ENCODE measurements at regions of chr4 and their contacts with region 1.

Region 1: DNA sequence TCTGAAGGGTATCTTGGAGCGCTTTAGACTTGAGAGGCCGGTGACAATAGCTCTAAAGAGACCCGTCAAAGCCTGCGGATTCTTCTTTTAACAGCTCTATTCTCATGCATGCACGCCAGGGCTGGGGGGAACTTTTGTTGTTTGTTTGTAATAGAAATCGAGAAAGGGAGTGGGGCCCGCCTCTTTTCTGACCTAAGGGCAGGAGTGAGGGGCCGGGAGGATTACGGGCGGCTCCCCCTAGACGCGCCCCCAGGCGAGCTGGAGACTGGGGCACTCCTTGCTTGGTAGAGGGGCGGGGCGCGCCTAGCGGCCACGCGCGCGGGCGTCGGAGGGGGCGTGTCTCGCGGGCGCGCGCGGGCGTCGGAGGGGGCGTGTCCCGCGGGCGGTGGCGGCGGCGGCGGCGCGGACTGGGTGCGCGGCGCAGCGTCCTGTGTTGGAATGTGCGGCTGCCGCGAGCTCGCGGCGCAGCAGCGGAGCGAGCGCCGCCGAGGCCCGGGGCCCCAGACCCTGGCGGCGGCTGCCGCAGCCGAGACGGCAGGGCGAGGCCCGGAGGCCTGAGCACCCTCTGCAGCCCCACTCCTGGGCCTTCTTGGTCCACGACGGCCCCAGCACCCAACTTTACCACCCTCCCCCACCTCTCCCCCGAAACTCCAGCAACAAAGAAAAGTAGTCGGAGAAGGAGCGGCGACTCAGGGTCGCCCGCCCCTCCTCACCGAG is at the start of gene REST:
- DNase-seq: peak; percentile 74 to 88
- H3K4me3 ChIP-seq: peak within 1 kb of the TSS; percentile 95
- H3K4me3 Mint-ChIP-seq: peak within 1 kb of the TSS; percentile 92
- H3K27ac Mint-ChIP-seq: peak within 1 kb of the TSS; percentile 97
- H3K4me1 ChIP-seq: peaks cover 21% of the 10 kb centered on the region
- H3K4me1 Mint-ChIP-seq: peaks cover 32% of the 10 kb centered on the region
- H3K27me3 ChIP-seq: no peaks in the 10 kb centered on the region
- H3K27me3 Mint-ChIP-seq: no peaks in the 10 kb centered on the region
- CTCF ChIP-seq: no peak
- total RNA-seq, gene REST: 49.3 and 56.6 TPM in 2 replicates

Region 2: DNA sequence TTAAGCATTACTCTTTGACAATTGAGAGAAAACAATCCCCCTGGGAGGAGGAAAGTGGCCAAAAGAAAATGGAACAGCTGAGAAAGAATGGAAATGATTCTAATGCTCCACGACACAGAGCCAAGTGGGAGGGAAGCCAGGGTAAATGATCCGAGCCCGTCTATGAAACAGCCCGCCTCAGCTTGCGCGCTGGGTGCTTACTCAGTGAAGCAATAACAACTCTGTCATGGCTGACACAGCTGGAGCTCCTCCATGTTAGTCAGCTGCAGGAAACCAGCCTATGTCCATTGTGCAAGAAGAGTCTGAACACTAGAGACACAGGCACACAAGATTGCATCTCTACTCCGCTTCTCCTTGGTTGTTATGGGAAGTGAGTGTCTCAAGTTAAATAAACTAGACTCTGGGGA is 50.5 kb after region 1 on chr4:
- CTCF ChIA-PET with region 1: interaction called, 3 read pairs
- POLR2A ChIA-PET with region 1: no interaction called
- intact Hi-C with region 1: loop called (anchors 2 kb)
- DNase-seq: no peak
- H3K4me3 ChIP-seq: no peak overlapping the region
- H3K4me3 Mint-ChIP-seq: no peak overlapping the region
- H3K27ac Mint-ChIP-seq: no peak overlapping the region
- H3K4me1 ChIP-seq: no peaks in the 10 kb centered on the region
- H3K4me1 Mint-ChIP-seq: no peaks in the 10 kb centered on the region
- H3K27me3 ChIP-seq: no peaks in the 10 kb centered on the region
- H3K27me3 Mint-ChIP-seq: no peaks in the 10 kb centered on the region
- CTCF ChIP-seq: no peak

Region 3: GRCh38 chr4:56977321-56978012 is 69.8 kb after region 1 on chr4 and contains the start of gene NOA1:
- CTCF ChIA-PET with region 1: interaction called, 13 read pairs
- POLR2A ChIA-PET with region 1: interaction called, 5 read pairs
- intact Hi-C with region 1: loop called (anchors 1 kb)
- DNase-seq: peak; percentile 97
- H3K4me3 ChIP-seq: peak within 1 kb of the TSS; percentile 94
- H3K4me3 Mint-ChIP-seq: peak within 1 kb of the TSS; percentile 99
- H3K27ac Mint-ChIP-seq: peak within 1 kb of the TSS; percentile 98
- H3K4me1 ChIP-seq: no peaks in the 10 kb centered on the region
- H3K4me1 Mint-ChIP-seq: peaks cover 9% of the 10 kb centered on the region
- H3K27me3 ChIP-seq: no peaks in the 10 kb centered on the region
- H3K27me3 Mint-ChIP-seq: no peaks in the 10 kb centered on the region
- CTCF ChIP-seq: no peak
- total RNA-seq, gene NOA1: 24.8 and 26.3 TPM in 2 replicates

Measured in Caco-2 (cell line).